SK-N-SH (cell line): ENCODE measurements at regions of chr6 and their contacts with region 1.

Region 1: GRCh38 chr6:79687759-79688158 is 56.6 kb downstream of the SH3BGRL2 start:
- DNase-seq: no peak
- H3K4me3 ChIP-seq: no peak overlapping the region
- H3K27ac ChIP-seq: no peak overlapping the region
- H3K4me1 ChIP-seq: peaks cover 0 to 15% of the 10 kb centered on the region in 2 experiments; a peak in 2 of 4 replicates
- H3K27me3 ChIP-seq: no peaks in the 10 kb centered on the region
- CTCF ChIP-seq: no peak
- EP300 ChIP-seq: no peak
- RAD21 ChIP-seq: no peak

Region 2: GRCh38 chr6:79450984-79451383 is 236.8 kb before region 1 on chr6:
- CTCF ChIA-PET with region 1: no interaction called
- POLR2A ChIA-PET with region 1: no interaction called
- DNase-seq: no peak
- H3K4me3 ChIP-seq: no peak overlapping the region
- H3K27ac ChIP-seq: no peak overlapping the region
- H3K4me1 ChIP-seq: no peaks in the 10 kb centered on the region; a peak in 1 of 4 replicates
- H3K27me3 ChIP-seq: no peaks in the 10 kb centered on the region
- CTCF ChIP-seq: no peak
- EP300 ChIP-seq: no peak
- RAD21 ChIP-seq: no peak

Region 3: DNA sequence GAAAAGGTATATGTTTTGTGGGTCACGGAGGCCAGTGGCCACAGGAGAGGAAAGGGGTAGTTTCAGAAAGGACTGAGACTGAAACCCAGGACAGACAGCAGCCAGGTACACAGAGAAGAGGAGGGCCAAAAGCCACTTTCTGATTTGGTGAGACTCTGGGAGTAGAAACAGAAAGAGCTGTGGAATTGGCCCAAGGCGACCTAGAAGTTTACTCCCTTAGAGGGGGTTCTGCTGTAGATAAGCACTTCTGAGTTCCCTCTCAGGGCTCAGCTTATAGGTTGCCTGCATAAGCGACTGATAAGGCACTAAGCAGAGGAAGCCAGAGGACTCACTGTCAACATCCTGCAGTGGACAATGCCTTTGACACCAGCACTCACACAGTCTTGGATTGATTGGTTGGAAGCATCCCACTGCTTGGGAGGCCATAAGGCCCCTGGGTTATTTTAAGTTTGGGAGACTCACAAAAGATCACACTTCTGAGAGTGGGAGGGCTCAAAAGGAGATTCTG is 73.0 kb before region 1 on chr6:
- CTCF ChIA-PET with region 1: no interaction called
- POLR2A ChIA-PET with region 1: no interaction called
- DNase-seq: no peak
- H3K4me3 ChIP-seq: no peak overlapping the region
- H3K27ac ChIP-seq: no peak overlapping the region
- H3K4me1 ChIP-seq: peaks cover 0 to 25% of the 10 kb centered on the region in 2 experiments; a peak in 2 of 4 replicates
- H3K27me3 ChIP-seq: no peaks in the 10 kb centered on the region
- CTCF ChIP-seq: no peak
- EP300 ChIP-seq: no peak
- RAD21 ChIP-seq: no peak

Region 4: GRCh38 chr6:79672631-79673111 is 15.1 kb before region 1 on chr6:
- CTCF ChIA-PET with region 1: interaction called, 12 read pairs
- POLR2A ChIA-PET with region 1: no interaction called
- DNase-seq: peak; percentile 12
- H3K4me3 ChIP-seq: no peak overlapping the region
- H3K27ac ChIP-seq: no peak overlapping the region
- H3K4me1 ChIP-seq: peaks cover 4 to 6% of the 10 kb centered on the region in 2 experiments; a peak in 3 of 4 replicates
- H3K27me3 ChIP-seq: no peaks in the 10 kb centered on the region
- CTCF ChIP-seq: peak; percentile 69
- EP300 ChIP-seq: no peak
- RAD21 ChIP-seq: peak; percentile 79